A549 (cell line): ENCODE measurements at regions of chr7 and their contacts with region 1.

Region 1: GRCh38 chr7:2354186-2354938 is at the start of gene EIF3B:
- DNase-seq: peak; percentile 91 to 97
- ATAC-seq: peak; percentile 89 to 92
- H3K4me3 ChIP-seq: peak within 1 kb of the TSS; percentile 99
- H3K27ac ChIP-seq: peak within 1 kb of the TSS; percentile 97 to 100
- H3K4me1 ChIP-seq: peaks cover 24% of the 10 kb centered on the region
- CTCF ChIP-seq: no peak
- EP300 ChIP-seq: no peak
- POLR2A ChIP-seq: peak; percentile 93
- RAD21 ChIP-seq: no peak
- polyA plus RNA-seq, gene EIF3B: 180 and 219 TPM in 2 replicates

Region 2: GRCh38 chr7:2082139-2082998 is 272.0 kb before region 1 on chr7:
- CTCF ChIA-PET with region 1: no interaction called
- POLR2A ChIA-PET with region 1: no interaction called
- DNase-seq: no peak
- ATAC-seq: no peak
- H3K4me3 ChIP-seq: no peak overlapping the region
- H3K27ac ChIP-seq: no peak overlapping the region
- H3K4me1 ChIP-seq: no peaks in the 10 kb centered on the region
- CTCF ChIP-seq: no peak
- EP300 ChIP-seq: no peak
- POLR2A ChIP-seq: no peak
- RAD21 ChIP-seq: no peak

Region 3: DNA sequence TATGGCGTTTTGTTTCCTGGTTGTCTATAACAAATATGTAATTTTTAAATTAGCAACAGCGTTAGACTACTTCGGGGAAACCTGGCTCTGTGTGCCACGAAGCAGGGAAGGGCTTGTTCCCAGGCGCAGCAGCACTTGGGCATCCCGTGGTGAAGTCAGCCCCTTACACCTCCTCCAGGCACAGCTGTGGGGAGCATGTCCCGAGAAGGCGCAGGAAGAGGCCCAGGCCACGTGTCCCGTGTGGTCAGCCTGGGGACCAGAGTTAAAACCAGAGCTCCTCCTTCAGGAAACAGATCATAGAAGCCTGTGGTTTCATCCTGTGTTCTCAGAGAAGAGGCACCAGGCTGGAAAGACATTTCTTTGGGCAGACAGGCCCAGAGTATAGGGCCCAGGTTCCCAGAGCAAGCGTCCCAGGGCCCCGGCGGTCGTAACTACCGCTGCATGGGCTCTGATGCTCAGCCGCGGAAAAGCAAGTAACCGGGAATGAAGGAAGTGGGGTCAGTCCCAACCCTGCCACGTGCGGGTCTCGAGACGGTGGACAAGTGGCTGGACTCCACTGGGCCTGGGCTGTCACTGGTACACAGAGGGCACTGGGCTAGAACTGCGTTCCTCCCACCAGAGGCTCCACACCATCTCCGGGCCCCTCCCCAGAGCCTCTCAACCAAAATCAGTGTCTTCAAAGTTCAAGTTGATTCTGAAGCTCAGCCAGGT is 105.2 kb before region 1 on chr7:
- CTCF ChIA-PET with region 1: interaction called, 32 read pairs
- POLR2A ChIA-PET with region 1: no interaction called
- DNase-seq: peak; percentile 66 to 71
- ATAC-seq: peak; percentile 62 to 71
- H3K4me3 ChIP-seq: no peak overlapping the region
- H3K27ac ChIP-seq: peak overlapping the region; percentile 52 to 82
- H3K4me1 ChIP-seq: peaks cover 15% of the 10 kb centered on the region
- CTCF ChIP-seq: no peak
- EP300 ChIP-seq: no peak
- POLR2A ChIP-seq: no peak
- RAD21 ChIP-seq: 0 out of 5 replicates have a peak, but pooled peaks of 1 of the 2 experiments have one; percentile 13

Region 4: DNA sequence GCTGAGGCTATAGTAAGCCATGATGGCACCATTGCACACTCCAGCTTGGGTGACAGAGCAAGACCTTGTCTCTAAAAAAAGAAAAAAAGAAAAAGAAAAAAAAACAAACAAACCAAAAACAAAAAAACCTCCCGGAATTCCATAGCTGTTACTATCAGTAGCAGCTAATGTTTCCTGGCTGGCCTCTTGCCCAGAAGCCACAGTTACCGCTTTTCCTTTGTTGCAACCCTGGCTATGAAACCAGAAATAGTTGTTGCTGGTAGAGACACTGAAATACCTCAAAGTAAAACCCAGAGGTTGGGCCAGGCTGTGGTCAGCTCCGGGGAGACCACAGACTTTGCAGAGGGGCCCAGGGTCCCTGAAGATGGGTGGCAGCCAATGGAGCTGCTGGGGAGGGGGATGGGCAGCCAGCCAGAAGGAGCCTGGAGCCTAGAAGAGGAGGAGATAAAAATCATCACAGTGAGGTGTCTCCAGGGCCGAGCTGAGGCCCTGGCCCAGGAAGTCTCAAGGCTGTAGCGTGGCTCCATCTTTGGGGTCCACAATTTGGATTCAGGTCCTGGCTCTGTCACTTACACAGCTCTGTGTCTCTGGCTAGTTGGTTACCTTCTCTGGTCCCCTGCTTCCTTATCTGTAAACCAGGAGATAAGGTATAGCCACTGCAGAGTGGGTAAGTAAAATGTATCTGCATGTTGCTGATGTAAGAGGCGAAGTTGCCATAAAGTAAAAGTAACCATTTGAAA is 45.7 kb after region 1 on chr7:
- CTCF ChIA-PET with region 1: no interaction called
- POLR2A ChIA-PET with region 1: interaction called, 11 read pairs
- DNase-seq: peak; percentile 44 to 54
- ATAC-seq: peak; percentile 7 to 31; a peak in 3 of 6 replicates
- H3K4me3 ChIP-seq: no peak overlapping the region
- H3K27ac ChIP-seq: peak overlapping the region; percentile 74 to 77
- H3K4me1 ChIP-seq: peaks cover 24% of the 10 kb centered on the region
- CTCF ChIP-seq: no peak
- EP300 ChIP-seq: no peak
- POLR2A ChIP-seq: no peak
- RAD21 ChIP-seq: no peak